ENCODE measurements at regions of chr9 and their contacts with region 1.

Region 1: GRCh38 chr9:89701221-89701798 is 96.5 kb downstream of the GADD45G start:
- DNase-seq: peak; percentile 93
- H3K4me3 Mint-ChIP-seq: peak overlapping the region; percentile 99
- H3K27ac Mint-ChIP-seq: peak overlapping the region; percentile 98
- H3K4me1 Mint-ChIP-seq: peaks cover 73% of the 10 kb centered on the region
- H3K27me3 Mint-ChIP-seq: no peaks in the 10 kb centered on the region

Region 2: GRCh38 chr9:89418882-89419640 is 282.2 kb before region 1 on chr9:
- intact Hi-C with region 1: loop called (anchors 5 kb)
- DNase-seq: peak; percentile 92
- H3K4me3 Mint-ChIP-seq: peak overlapping the region; percentile 93
- H3K27ac Mint-ChIP-seq: peak overlapping the region; percentile 86
- H3K4me1 Mint-ChIP-seq: peaks cover 82% of the 10 kb centered on the region
- H3K27me3 Mint-ChIP-seq: no peaks in the 10 kb centered on the region

Region 3: DNA sequence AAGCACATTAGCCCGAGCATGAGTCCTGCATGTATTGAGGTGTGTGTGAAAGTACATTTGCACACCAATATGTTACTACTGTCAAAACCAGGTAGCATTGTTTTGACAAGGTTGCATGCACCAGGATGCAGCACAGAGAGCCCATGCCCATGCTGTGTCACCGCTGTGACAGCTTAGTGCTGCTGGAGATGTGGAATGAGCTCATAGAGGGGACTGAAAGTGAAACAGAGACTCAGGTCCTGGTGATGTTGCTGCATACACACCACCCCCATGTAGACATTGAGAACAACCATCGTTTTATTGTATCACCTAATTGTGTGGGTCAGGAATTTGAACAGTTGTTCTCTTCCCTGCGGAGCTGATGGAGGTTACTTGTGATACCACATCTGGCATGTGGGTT is 43.5 kb before region 1 on chr9:
- intact Hi-C with region 1: loop called (anchors 5 kb)
- DNase-seq: peak; percentile 88
- H3K4me3 Mint-ChIP-seq: no peak overlapping the region
- H3K27ac Mint-ChIP-seq: no peak overlapping the region
- H3K4me1 Mint-ChIP-seq: peaks cover 48% of the 10 kb centered on the region
- H3K27me3 Mint-ChIP-seq: peaks cover 14% of the 10 kb centered on the region

Region 4: GRCh38 chr9:89690334-89690912 is 10.9 kb before region 1 on chr9:
- intact Hi-C with region 1: loop called (anchors 1 kb)
- DNase-seq: no peak
- H3K4me3 Mint-ChIP-seq: no peak overlapping the region
- H3K27ac Mint-ChIP-seq: peak overlapping the region; percentile 80
- H3K4me1 Mint-ChIP-seq: peaks cover 43% of the 10 kb centered on the region
- H3K27me3 Mint-ChIP-seq: no peaks in the 10 kb centered on the region

Region 5: GRCh38 chr9:89743573-89744361 is 42.5 kb after region 1 on chr9:
- intact Hi-C with region 1: loop called (anchors 2 kb)
- DNase-seq: peak; percentile 94
- H3K4me3 Mint-ChIP-seq: peak overlapping the region; percentile 67
- H3K27ac Mint-ChIP-seq: peak overlapping the region; percentile 87
- H3K4me1 Mint-ChIP-seq: peaks cover 80% of the 10 kb centered on the region
- H3K27me3 Mint-ChIP-seq: no peaks in the 10 kb centered on the region

Region 6: GRCh38 chr9:89755821-89756220 is 54.5 kb after region 1 on chr9:
- intact Hi-C with region 1: no loop called
- DNase-seq: no peak
- H3K4me3 Mint-ChIP-seq: no peak overlapping the region
- H3K27ac Mint-ChIP-seq: no peak overlapping the region
- H3K4me1 Mint-ChIP-seq: peaks cover 10% of the 10 kb centered on the region
- H3K27me3 Mint-ChIP-seq: peaks cover 2% of the 10 kb centered on the region

Region 7: GRCh38 chr9:89919169-89919681 is 217.9 kb after region 1 on chr9:
- intact Hi-C with region 1: loop called (anchors 1 kb)
- DNase-seq: peak; percentile 87
- H3K4me3 Mint-ChIP-seq: no peak overlapping the region
- H3K27ac Mint-ChIP-seq: peak overlapping the region; percentile 56
- H3K4me1 Mint-ChIP-seq: peaks cover 38% of the 10 kb centered on the region
- H3K27me3 Mint-ChIP-seq: peaks cover 3% of the 10 kb centered on the region

Region 8: DNA sequence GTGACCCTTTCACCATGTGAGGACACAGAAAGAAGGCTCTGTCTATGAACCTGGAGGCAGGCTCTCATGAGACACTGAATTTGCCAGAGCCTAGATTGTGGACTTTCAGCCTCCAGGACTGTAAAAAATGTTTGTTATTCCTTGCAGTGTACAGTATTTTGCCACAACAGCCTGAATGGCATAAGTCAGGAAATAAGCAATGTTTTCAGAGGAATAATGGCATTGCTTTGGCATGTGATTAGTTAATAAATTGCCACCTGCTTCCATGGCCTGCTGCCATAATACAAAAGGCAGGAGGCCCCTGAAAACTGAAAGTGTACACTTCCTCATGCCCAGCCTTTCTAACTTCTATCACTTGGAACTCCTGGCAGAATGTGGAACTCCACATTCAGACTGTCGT is 311.6 kb after region 1 on chr9:
- intact Hi-C with region 1: no loop called
- DNase-seq: no peak
- H3K4me3 Mint-ChIP-seq: no peak overlapping the region
- H3K27ac Mint-ChIP-seq: no peak overlapping the region
- H3K4me1 Mint-ChIP-seq: no peaks in the 10 kb centered on the region
- H3K27me3 Mint-ChIP-seq: peaks cover 19% of the 10 kb centered on the region